ENCODE measurements at regions of chr11 and their contacts with region 1.

Region 1: GRCh38 chr11:62400760-62401159 is 18.1 kb upstream of the SCGB1A1 start:
- DNase-seq: peak; percentile 41 to 87 (median 69)

Region 2: DNA sequence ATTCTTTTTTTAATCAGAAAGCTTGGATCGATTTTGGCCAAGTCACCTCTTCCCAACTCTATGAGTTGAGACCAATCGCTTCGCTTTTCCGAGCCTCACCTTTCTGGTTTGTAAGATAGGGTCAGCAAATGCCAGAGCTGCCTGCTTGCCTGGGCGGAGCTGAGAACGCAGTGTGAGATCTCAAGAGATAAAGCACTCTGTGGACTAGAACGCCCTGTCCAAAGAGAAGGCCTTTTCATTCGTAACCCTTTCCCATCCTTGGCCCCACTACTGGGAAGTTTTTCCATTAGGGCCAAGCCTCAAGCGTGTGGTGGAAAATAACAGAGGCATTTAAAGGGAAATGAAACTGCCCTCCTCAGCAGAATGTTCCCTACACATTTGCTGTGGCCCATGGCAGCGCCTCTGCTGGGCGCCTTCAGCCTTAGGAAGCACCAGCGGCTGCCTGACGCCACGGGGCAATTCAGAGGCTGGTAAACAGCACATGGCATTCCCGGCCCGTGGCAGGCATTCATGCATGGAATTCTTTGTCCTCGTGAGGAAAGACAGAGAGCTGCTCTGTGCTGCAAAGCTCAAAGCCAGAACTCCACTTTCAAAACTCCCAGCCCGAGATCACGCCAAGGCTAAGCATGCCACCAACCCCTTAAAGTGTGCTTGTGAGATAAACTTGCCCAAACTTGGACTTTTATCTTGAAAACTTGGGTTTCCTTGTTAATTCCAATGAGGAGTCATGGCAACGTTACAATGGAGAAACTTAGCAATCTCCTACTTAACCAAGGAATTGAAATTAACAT is 107.7 kb after region 1 on chr11:
- intact Hi-C with region 1: loop called (anchors 10 kb)
- DNase-seq: peak; percentile 65 to 91 (median 82)